Activated CD4-positive, alpha-beta T cell treated with anti-CD3 and anti-CD28 coated beads for 36 hours (primary cell): ENCODE measurements at regions of chr16 and their contacts with region 1.

Region 1: GRCh38 chr16:20741554-20742285 is at the start of gene THUMPD1:
- DNase-seq: peak; percentile 99
- ATAC-seq: peak; percentile 95
- H3K4me3 Mint-ChIP-seq: peak within 1 kb of the TSS; percentile 92
- H3K27ac Mint-ChIP-seq: peak within 1 kb of the TSS; percentile 95
- H3K4me1 Mint-ChIP-seq: peaks cover 27% of the 10 kb centered on the region
- H3K27me3 Mint-ChIP-seq: no peaks in the 10 kb centered on the region
- total RNA-seq, gene THUMPD1: 38.0 to 48.2 TPM

Region 2: GRCh38 chr16:19521471-19522396 is 1220.0 kb before region 1 on chr16 and contains the start of gene GDE1:
- CTCF ChIA-PET with region 1: no interaction called
- POLR2A ChIA-PET with region 1: no interaction called
- intact Hi-C with region 1: loop called (anchors 2 to 5 kb)
- DNase-seq: peak; percentile 97
- ATAC-seq: peak; percentile 83
- H3K4me3 Mint-ChIP-seq: peak within 1 kb of the TSS; percentile 94
- H3K27ac Mint-ChIP-seq: peak within 1 kb of the TSS; percentile 90
- H3K4me1 Mint-ChIP-seq: peaks cover 45% of the 10 kb centered on the region
- H3K27me3 Mint-ChIP-seq: no peaks in the 10 kb centered on the region
- total RNA-seq, gene GDE1: 13.8 to 18.1 TPM

Region 3: DNA sequence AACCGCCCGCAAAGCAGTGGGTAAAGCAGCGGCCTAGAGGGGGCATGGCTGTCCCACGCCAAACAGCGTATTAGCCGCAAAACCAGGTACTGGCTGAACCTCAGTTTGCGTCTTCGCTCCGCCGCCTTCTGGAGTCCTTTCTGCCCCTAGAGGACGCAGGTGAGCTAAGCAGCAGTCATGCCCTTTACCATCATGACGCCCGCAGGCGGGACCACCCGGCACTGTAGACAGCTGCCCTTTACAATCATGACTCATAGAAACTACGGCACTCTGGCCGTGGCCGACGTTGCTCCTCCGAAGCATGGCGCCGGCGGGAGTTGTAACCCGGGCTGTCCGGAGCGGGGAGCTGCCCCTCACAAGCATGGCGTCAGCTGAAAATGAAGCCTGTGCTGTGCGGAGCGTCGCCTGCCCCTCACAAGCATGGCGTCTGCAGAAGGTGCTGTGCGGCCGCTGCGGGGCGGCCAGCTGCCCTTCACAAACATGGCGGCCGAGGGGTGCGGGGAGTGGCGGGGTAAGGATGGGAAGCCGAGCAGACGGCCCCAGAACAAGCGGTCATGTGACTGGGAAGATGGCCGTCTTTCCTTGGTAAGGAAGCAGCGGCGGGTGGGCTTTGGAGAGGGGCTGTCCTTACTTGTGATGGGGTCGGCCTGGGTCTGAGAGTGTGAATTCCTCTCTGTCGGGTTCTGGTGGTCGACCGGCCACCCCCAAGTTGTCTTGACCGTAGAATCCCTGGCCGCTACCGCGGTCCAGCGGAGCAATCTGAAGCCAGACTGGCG is 1186.4 kb before region 1 on chr16 and contains the start of gene VPS35L:
- CTCF ChIA-PET with region 1: no interaction called
- POLR2A ChIA-PET with region 1: no interaction called
- intact Hi-C with region 1: loop called in 1 of 2 experiments (anchors 1 kb)
- DNase-seq: peak; percentile 96
- ATAC-seq: peak; percentile 97
- H3K4me3 Mint-ChIP-seq: peak within 1 kb of the TSS; percentile 86
- H3K27ac Mint-ChIP-seq: peak within 1 kb of the TSS; percentile 87
- H3K4me1 Mint-ChIP-seq: peaks cover 20% of the 10 kb centered on the region
- H3K27me3 Mint-ChIP-seq: no peaks in the 10 kb centered on the region
- total RNA-seq, gene VPS35L: 30.7 to 31.6 TPM

Region 4: DNA sequence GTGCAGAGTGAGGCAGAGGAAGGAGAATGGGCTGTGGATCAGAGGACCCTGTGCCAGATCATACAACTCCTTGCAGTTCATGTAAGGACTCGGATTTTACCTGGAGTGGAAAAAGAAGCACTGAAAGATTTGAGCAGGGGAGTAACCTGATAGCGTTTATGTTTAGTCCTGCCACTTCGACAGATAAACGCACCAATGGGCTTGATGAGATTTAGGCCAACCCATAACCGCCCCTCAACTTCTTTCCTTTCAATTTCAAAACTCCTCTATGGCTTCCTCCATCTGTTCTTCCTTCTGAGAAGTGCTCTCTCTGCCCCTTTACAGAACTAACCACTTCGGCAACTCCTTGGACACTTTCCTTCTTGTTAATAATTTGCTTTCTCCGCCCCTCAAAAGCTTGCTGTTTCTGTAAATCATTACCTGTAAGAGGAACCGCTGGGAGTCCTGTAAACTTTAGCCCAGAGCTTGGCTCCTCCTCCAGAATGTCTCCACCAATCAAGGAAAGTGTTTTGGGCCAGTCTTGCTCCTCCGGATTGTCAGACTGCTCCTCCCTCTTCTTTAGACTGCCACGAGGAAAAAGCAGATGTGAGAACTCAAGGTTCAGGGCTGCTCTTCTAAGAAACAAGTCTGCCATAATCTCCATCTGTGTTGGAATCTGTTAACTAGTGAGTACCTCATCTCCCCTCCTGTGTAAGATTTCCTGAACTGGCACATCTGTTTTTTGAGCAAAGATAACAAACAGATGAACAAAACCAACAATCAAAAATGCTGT is 21.9 kb after region 1 on chr16 and contains the start of gene ACSM3:
- CTCF ChIA-PET with region 1: no interaction called
- POLR2A ChIA-PET with region 1: no interaction called
- intact Hi-C with region 1: loop called (anchors 1 kb)
- DNase-seq: peak; percentile 75
- ATAC-seq: peak; percentile 99
- H3K4me3 Mint-ChIP-seq: peak within 1 kb of the TSS; percentile 83
- H3K27ac Mint-ChIP-seq: peak within 1 kb of the TSS; percentile 93
- H3K4me1 Mint-ChIP-seq: peaks cover 22% of the 10 kb centered on the region
- H3K27me3 Mint-ChIP-seq: no peaks in the 10 kb centered on the region
- total RNA-seq, gene ACSM3: 17.6 to 21.8 TPM

Region 5: DNA sequence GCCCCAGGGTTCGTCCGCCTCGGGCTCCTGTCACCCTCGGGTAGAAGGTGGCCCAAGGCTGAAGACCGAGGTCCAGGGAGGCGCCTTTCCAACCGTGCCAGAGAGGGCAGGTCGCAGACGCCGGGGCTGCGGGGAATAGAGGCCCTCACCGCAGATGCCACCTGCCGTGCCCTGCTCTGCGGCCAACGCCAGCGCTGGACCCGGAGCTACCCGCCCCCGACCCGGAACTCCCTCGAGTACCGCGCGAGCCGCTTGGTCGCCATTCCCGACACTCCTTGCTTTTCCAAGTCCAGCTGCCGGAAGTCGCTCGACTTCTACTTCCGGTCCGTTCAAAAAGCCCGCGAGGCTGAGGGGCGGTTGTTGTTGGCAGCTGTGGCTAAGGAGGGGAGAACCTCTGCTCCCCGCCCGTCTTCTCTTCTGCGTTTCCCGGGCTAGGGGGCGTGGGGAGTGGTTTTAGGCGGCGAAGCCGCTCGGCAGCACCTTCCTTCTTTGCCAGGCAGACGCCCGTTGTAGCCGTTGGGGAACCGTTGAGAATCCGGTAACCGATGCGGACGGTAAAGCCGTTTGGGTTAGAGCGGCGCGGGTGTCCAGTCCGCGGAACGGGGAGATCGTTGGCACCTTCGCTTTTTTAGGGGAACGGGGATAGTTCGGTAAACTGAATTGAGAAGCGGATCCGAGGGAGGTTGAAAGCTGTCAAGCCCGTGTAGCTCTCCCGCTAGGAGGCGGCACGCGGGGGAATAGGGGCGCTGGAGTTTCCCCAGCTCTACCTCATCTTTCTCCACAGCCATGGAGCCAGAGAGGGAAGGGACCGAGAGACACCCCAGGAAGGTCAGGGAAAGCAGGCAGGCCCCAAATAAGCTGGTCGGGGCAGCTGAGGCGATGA is 64.7 kb after region 1 on chr16 and contains the starts of genes ERI2 and REXO5:
- CTCF ChIA-PET with region 1: no interaction called
- POLR2A ChIA-PET with region 1: no interaction called
- intact Hi-C with region 1: loop called in 1 of 2 experiments (anchors 1 kb)
- DNase-seq: peak; percentile 86
- ATAC-seq: peak; percentile 87
- H3K4me3 Mint-ChIP-seq: peak within 1 kb of the TSS; percentile 79
- H3K27ac Mint-ChIP-seq: peak within 1 kb of the TSS; percentile 97
- H3K4me1 Mint-ChIP-seq: peaks cover 18% of the 10 kb centered on the region
- H3K27me3 Mint-ChIP-seq: no peaks in the 10 kb centered on the region
- total RNA-seq, gene ERI2: 17.6 to 19.8 TPM
- total RNA-seq, gene REXO5: 17.9 to 20.4 TPM

Region 6: GRCh38 chr16:20944861-20945574 is 203.3 kb after region 1 on chr16:
- CTCF ChIA-PET with region 1: no interaction called
- POLR2A ChIA-PET with region 1: no interaction called
- intact Hi-C with region 1: loop called in 1 of 2 experiments (anchors 5 kb)
- DNase-seq: peak; percentile 78
- ATAC-seq: peak; percentile 78
- H3K4me3 Mint-ChIP-seq: no peak overlapping the region
- H3K27ac Mint-ChIP-seq: peak overlapping the region; percentile 55
- H3K4me1 Mint-ChIP-seq: peaks cover 33% of the 10 kb centered on the region
- H3K27me3 Mint-ChIP-seq: no peaks in the 10 kb centered on the region

Region 7: DNA sequence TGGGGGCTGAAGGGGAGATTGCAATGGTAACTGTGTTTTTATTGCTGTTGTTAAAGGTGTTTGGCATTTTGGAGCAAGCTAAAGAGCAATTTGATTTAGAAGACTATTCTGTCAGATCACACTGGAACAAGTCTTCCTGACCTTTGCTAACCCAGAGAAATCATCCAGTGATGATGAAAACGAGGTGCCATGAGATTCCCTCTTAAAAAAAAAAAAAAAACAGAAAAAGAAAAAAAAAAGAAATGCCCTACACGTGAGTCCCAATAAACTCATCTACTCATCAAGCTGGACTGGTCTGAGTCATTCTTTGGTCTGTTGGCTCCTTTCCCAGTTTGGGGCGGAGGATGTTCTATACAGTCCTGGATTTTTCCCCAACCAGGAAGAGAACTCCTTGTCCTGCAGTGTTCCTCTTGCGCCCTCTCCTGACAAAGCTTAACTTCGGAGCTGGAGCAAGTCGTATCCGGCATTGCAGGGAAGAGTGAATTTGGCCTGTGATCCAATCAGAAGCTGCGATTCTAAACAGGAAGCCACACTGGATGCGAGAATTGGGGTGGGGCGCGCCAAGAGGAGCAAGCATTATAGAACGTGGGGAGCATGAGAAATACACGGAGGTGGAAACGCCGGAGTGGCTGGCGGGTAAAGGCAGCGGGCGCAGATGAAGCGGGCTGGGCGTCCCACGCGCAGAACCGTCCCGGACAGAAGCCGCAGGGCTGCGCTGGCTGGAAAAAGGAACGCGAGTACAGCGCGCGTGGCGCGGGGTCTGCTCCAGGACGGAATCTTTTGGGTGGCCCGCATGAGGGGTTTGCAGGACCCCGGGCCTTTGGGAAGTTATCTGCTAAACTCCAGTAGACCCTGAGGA is 558.8 kb after region 1 on chr16:
- CTCF ChIA-PET with region 1: no interaction called
- POLR2A ChIA-PET with region 1: no interaction called
- intact Hi-C with region 1: loop called in 1 of 2 experiments (anchors 1 kb)
- DNase-seq: peak; percentile 81
- ATAC-seq: peak; percentile 77
- H3K4me3 Mint-ChIP-seq: peak overlapping the region; percentile 85
- H3K27ac Mint-ChIP-seq: peak overlapping the region; percentile 81
- H3K4me1 Mint-ChIP-seq: peaks cover 25% of the 10 kb centered on the region
- H3K27me3 Mint-ChIP-seq: peaks cover 22% of the 10 kb centered on the region